Activated T-helper 1 cell treated with anti-CD3 and anti-CD28 coated beads, Interleukin-12 subunit alpha, Interleukin-12 subunit beta, Interleukin-2, Interleukin-4 antibody, amounts not matched to agents 30 ng/mL and 10 ng/mL and 1 ng/mL, durations not matched to agents 14 hours and 24 hours and 36 hours (primary cell): ENCODE measurements at regions of chr1 and their contacts with region 1.

Region 1: DNA sequence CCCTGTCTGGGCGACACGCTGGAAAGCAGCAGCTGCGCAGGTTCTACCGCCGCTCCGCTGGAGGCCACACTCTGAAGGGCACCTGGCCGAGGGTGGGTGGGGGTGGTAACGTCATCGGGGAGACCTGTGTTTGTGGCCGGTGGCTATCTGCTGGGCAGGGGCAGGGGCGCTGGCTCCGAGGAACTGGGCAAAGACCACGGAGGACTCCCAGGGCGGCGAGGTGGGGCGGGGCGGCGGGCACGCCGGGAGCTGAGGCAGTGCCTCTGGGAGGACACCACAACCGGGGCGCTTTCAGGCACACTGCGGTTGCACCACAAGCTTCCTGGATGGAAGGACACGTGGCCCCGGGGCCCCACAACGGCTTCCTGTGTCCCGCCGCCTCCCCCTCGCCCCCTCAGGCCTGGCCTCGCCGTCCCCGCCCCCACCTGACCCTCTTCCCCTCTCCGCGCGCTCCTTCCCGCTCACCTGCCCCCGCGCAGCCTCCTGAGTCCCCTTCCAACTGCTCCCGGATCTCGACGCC is 3.3 kb upstream of the DENND2D start:
- DNase-seq: peak; percentile 80
- H3K4me3 Mint-ChIP-seq: peak overlapping the region; percentile 100
- H3K27ac Mint-ChIP-seq: peak overlapping the region; percentile 92
- H3K4me1 Mint-ChIP-seq: peaks cover 59% of the 10 kb centered on the region
- H3K27me3 Mint-ChIP-seq: no peaks in the 10 kb centered on the region

Region 2: GRCh38 chr1:110235834-110236682 is 967.7 kb before region 1 on chr1:
- intact Hi-C with region 1: loop called (anchors 10 kb)
- DNase-seq: no peak
- H3K4me3 Mint-ChIP-seq: no peak overlapping the region
- H3K27ac Mint-ChIP-seq: peak overlapping the region; percentile 80
- H3K4me1 Mint-ChIP-seq: peaks cover 51% of the 10 kb centered on the region
- H3K27me3 Mint-ChIP-seq: no peaks in the 10 kb centered on the region